Calu3 (cell line): ENCODE measurements at regions of chr6 and their contacts with region 1.

Region 1: DNA sequence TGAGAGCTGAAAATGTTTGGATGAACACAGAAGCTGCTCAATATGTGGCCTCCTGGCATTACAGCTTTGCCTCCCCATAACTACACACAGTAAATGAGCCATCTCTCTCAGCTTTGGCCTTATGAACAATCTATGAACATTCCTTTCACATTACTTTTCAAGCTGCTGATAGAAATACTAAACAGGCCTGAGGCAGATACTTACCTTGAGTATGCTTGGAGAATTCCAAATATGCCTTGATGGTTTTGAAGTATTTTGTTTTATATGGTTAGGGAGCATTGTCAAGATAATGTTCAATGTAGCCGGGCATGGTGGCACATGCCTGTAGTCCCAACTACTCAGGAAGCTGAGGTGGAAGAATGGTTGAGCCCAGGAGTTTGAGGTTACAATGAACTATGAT is 104.5 kb downstream of the CD24 start:
- DNase-seq: peak; percentile 47
- H3K4me3 Mint-ChIP-seq: no peak overlapping the region
- H3K27ac Mint-ChIP-seq: peak overlapping the region; percentile 68
- H3K4me1 Mint-ChIP-seq: peaks cover 52% of the 10 kb centered on the region
- H3K27me3 Mint-ChIP-seq: no peaks in the 10 kb centered on the region
- CTCF ChIP-seq: no peak

Region 2: GRCh38 chr6:106804346-106805335 is 65.4 kb before region 1 on chr6:
- CTCF ChIA-PET with region 1: interaction called, 5 read pairs
- intact Hi-C with region 1: loop called (anchors 1 kb)
- DNase-seq: peak; percentile 69
- H3K4me3 Mint-ChIP-seq: no peak overlapping the region
- H3K27ac Mint-ChIP-seq: peak overlapping the region; percentile 56
- H3K4me1 Mint-ChIP-seq: peaks cover 37% of the 10 kb centered on the region
- H3K27me3 Mint-ChIP-seq: no peaks in the 10 kb centered on the region
- CTCF ChIP-seq: no peak

Region 3: DNA sequence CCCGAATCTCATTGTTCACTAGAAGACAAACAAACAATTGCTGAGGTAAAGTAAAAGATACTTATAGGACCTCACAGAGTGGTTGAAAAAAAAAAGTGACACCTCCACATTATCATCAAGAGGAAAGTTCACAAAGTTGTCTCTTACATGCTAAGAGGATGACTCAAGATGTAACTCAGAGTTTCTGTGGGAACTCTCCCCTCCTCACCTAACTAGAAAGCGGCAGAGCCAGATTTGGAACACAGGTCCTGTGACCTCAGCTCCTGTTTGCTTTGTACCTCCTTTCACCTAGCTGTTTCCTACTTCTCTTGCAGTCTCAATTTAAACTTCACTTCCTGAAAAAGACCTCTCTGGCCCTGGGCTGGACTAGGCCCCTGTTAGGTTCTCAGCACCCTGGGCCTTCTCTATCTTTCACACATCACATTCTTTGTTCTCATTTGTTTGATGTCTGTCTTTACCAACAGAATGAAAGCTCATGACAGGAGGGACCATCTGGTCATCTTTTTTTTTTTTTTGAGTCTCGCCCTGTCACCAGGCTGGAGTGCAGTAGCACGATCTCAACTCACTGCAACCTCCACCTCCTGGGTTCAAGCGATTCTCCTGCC is 43.7 kb after region 1 on chr6:
- CTCF ChIA-PET with region 1: no interaction called
- intact Hi-C with region 1: loop called (anchors 5 kb)
- DNase-seq: peak; percentile 18
- H3K4me3 Mint-ChIP-seq: no peak overlapping the region
- H3K27ac Mint-ChIP-seq: peak overlapping the region; percentile 9
- H3K4me1 Mint-ChIP-seq: peaks cover 35% of the 10 kb centered on the region
- H3K27me3 Mint-ChIP-seq: no peaks in the 10 kb centered on the region
- CTCF ChIP-seq: no peak